CD4-positive, alpha-beta memory T cell (primary cell): ENCODE measurements at regions of chr5 and their contacts with region 1.

Region 1: DNA sequence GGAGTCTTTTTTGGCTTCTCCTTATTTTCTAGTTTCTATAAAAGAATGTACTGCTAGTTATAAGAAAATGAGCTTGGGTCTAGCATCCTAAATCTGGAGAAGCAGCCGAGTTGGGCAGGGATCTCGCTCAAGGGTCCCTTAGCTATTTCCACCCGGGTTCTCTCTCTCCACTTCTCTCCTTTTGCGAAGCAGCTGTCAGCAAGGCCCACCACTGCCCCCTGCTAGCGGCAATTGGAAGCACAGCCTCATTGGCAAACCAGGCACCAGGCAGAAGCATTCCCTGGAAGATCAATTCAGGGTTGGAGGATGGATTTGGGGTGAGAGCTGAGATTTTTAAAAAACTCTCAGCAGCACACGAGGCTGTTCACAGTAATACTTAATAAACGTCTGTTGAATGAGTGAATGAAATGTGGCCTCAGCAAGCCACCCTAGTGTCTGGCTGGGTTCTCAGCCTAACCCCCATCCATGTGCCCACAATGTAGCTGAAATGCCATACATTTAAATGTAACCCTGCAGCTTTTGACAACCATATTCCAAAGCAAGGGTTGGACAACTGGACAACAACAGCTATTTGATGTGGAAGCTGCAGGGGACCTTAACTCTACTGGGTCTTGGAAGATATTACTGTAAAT is 34.6 kb upstream of the TNIP1 start:
- DNase-seq: peak; percentile 62 to 73 (median 65)
- H3K4me3 ChIP-seq: no peak overlapping the region
- H3K4me3 Mint-ChIP-seq: no peak overlapping the region
- H3K27ac ChIP-seq: peak overlapping the region; percentile 8
- H3K27ac Mint-ChIP-seq: peak overlapping the region in 2 of 7 donors; percentile 36 to 60
- H3K4me1 ChIP-seq: peaks cover 11% of the 10 kb centered on the region
- H3K4me1 Mint-ChIP-seq: peaks cover 0 to 13% (median 7%) of the 10 kb centered on the region in 4 donors
- H3K27me3 ChIP-seq: no peaks in the 10 kb centered on the region
- H3K27me3 Mint-ChIP-seq: no peaks in the 10 kb centered on the region

Region 2: DNA sequence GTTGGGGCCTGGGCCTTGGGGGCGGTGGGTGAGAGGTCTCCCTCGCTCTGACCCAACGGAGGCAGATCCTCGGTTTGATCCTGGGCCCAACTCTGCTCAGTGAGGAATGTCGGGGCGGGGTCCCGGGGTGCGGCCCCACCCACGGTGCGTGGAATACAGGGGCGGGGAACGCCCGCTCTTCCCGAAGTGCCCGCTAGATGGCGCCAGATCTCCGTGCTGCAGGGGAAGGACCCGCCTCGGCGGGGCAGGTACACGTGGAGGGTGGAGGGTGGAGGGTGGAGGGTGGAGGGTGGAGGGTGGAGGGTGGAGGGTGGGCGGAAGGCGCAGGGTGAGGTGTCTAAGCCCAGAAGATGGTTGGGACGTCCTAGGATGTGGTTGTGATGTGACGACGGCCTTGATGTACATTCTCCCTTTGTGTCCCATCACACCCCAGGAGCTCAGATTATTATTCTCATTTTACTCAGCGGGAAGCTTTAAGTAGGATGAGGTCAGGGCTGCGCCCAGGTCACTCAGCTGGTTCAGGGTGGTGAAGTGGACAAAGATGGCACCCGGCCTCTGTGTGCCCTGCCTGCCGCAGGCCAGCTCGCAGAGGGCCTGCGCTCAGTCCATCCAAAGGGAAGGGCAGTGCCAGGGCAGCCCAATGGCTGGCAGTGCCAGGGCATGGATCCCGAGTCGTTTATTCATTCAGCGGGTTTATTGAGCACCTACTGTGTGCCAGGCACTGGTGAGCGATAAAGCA is 656.4 kb before region 1 on chr5:
- CTCF ChIA-PET with region 1: interaction called, 13 read pairs
- POLR2A ChIA-PET with region 1: no interaction called
- intact Hi-C with region 1: no loop called
- DNase-seq: peak; percentile 82 to 86 (median 82)
- H3K4me3 ChIP-seq: no peak overlapping the region
- H3K4me3 Mint-ChIP-seq: peak overlapping the region in 5 of 8 donors; percentile 29 to 72 (median 49)
- H3K27ac ChIP-seq: no peak overlapping the region
- H3K27ac Mint-ChIP-seq: peak overlapping the region; percentile 52 to 88 (median 70)
- H3K4me1 ChIP-seq: peaks cover 19% of the 10 kb centered on the region
- H3K4me1 Mint-ChIP-seq: peaks cover 12 to 29% (median 21%) of the 10 kb centered on the region in 4 donors
- H3K27me3 ChIP-seq: no peaks in the 10 kb centered on the region
- H3K27me3 Mint-ChIP-seq: no peaks in the 10 kb centered on the region

Region 3: DNA sequence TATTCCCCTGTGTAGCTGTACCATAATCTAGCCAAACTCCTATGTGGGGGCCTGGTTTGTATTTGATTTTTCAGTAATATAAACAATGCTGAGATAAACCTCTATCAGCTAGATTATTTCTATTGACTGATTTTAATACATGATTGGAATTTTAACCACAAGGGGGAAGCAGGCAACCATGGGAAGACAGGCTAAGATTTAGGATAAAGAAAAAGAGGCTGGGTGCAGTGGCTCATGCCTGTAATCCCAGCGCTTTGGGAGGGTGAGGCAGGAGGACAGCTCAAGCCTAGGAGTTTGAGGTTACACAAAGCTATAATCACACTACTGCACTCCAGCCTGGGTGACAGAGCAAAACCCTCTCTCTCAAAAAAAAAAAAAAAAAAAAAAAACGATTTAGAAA is 113.1 kb before region 1 on chr5:
- CTCF ChIA-PET with region 1: interaction called, 17 read pairs
- POLR2A ChIA-PET with region 1: no interaction called
- intact Hi-C with region 1: loop called (anchors 1 kb)
- DNase-seq: no peak
- H3K4me3 ChIP-seq: no peak overlapping the region
- H3K4me3 Mint-ChIP-seq: no peak overlapping the region
- H3K27ac ChIP-seq: no peak overlapping the region
- H3K27ac Mint-ChIP-seq: no peak overlapping the region
- H3K4me1 ChIP-seq: no peaks in the 10 kb centered on the region
- H3K4me1 Mint-ChIP-seq: no peaks in the 10 kb centered on the region
- H3K27me3 ChIP-seq: no peaks in the 10 kb centered on the region
- H3K27me3 Mint-ChIP-seq: peaks cover 0 to 4% of the 10 kb centered on the region in 2 donors

Region 4: DNA sequence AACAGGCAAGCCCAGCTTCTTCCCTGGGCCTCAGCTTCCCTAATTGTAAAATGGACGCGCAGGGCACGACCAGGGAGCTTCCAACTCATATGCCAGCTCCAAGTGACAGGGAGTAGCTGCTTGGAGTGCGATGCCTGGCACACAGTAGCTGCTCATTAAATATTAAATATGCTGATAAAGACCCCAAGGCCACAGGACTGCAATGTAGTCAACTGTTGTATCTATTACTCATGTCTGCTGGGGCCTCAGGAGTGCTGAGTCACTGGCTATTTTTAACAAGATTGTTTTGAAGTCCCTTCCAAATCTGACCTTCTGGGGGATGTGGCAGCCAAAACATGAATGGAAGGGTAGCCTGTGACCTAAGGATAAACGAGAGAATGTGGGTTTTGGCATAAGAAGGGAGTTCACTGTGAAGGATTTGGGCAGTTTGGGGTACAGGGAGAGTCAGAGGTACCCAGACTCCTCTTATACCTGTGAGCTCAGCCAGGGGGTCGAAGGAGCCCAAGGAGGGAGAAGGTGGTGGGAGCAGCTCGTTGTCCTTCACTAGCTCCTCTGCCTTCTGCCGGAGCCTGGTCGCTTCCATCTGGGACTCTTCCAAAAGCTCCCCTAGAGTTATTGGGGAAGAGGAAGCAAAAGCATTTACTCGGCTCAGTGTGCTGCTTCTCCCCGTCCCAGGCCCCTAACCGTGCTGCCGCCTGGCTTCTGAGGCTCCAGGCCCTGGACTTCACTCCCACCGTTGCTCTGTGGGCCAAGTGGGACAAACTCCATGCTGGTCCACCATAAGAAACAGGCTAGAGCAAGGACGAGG is 52.0 kb before region 1 on chr5:
- CTCF ChIA-PET with region 1: interaction called, 601 read pairs
- POLR2A ChIA-PET with region 1: interaction called, 7 read pairs
- intact Hi-C with region 1: no loop called
- DNase-seq: no peak
- H3K4me3 ChIP-seq: no peak overlapping the region
- H3K4me3 Mint-ChIP-seq: no peak overlapping the region
- H3K27ac ChIP-seq: no peak overlapping the region
- H3K27ac Mint-ChIP-seq: peak overlapping the region in 4 of 7 donors; percentile 29 to 65 (median 48)
- H3K4me1 ChIP-seq: peaks cover 60% of the 10 kb centered on the region
- H3K4me1 Mint-ChIP-seq: peaks cover 42 to 71% (median 63%) of the 10 kb centered on the region in 4 donors
- H3K27me3 ChIP-seq: no peaks in the 10 kb centered on the region
- H3K27me3 Mint-ChIP-seq: peaks cover 2 to 3% of the 10 kb centered on the region in 2 donors

Region 5: GRCh38 chr5:151086905-151087360 is 28.5 kb before region 1 on chr5:
- CTCF ChIA-PET with region 1: interaction called, 80 read pairs
- POLR2A ChIA-PET with region 1: interaction called, 28 read pairs
- intact Hi-C with region 1: loop called (anchors 1 kb)
- DNase-seq: peak; percentile 65 to 84 (median 69)
- H3K4me3 ChIP-seq: peak overlapping the region; percentile 20 to 48
- H3K4me3 Mint-ChIP-seq: peak overlapping the region; percentile 65 to 83 (median 76)
- H3K27ac ChIP-seq: peak overlapping the region; percentile 99
- H3K27ac Mint-ChIP-seq: peak overlapping the region; percentile 76 to 94 (median 90)
- H3K4me1 ChIP-seq: peaks cover 59% of the 10 kb centered on the region
- H3K4me1 Mint-ChIP-seq: peaks cover 41 to 68% (median 57%) of the 10 kb centered on the region in 4 donors
- H3K27me3 ChIP-seq: no peaks in the 10 kb centered on the region
- H3K27me3 Mint-ChIP-seq: no peaks in the 10 kb centered on the region

Region 6: DNA sequence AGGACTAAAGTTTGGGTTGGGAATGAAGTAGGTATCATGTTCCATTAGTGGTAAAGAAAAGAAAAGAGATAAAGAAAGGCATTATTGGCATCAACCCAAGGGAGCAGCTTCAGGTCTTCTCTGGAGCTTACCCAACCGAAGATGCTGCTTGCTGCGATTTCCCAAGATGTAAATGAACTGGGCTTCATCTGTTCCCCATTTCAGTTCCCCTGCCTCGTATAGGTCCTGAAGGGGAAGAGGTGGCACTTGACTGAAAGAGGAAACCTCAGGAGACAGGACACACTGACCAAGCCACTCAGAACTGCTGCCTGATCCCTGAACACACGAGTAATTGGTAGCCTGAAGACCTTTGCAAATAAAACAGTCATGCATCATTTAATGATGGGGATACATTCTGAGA is 17.6 kb after region 1 on chr5:
- CTCF ChIA-PET with region 1: interaction called, 2,066 read pairs
- POLR2A ChIA-PET with region 1: no interaction called
- intact Hi-C with region 1: no loop called
- DNase-seq: no peak
- H3K4me3 ChIP-seq: no peak overlapping the region
- H3K4me3 Mint-ChIP-seq: peak overlapping the region in 1 of 8 donors; percentile 30
- H3K27ac ChIP-seq: no peak overlapping the region
- H3K27ac Mint-ChIP-seq: peak overlapping the region; percentile 29 to 94 (median 55)
- H3K4me1 ChIP-seq: peaks cover 50% of the 10 kb centered on the region
- H3K4me1 Mint-ChIP-seq: peaks cover 44 to 79% (median 71%) of the 10 kb centered on the region in 4 donors
- H3K27me3 ChIP-seq: no peaks in the 10 kb centered on the region
- H3K27me3 Mint-ChIP-seq: no peaks in the 10 kb centered on the region